IMR-90 (cell line): ENCODE measurements at regions of chr1 and their contacts with region 1.

Region 1: GRCh38 chr1:206583707-206584648 is 28.3 kb downstream of the EIF2D start:
- DNase-seq: peak; percentile 65
- ATAC-seq: peak; percentile 78
- H3K4me3 ChIP-seq: no peak overlapping the region
- H3K27ac ChIP-seq: no peak overlapping the region
- H3K4me1 ChIP-seq: peaks cover 13% of the 10 kb centered on the region
- H3K27me3 ChIP-seq: no peaks in the 10 kb centered on the region
- CTCF ChIP-seq: peak; percentile 91
- POLR2A ChIP-seq: no peak
- RAD21 ChIP-seq: peak; percentile 85

Region 2: DNA sequence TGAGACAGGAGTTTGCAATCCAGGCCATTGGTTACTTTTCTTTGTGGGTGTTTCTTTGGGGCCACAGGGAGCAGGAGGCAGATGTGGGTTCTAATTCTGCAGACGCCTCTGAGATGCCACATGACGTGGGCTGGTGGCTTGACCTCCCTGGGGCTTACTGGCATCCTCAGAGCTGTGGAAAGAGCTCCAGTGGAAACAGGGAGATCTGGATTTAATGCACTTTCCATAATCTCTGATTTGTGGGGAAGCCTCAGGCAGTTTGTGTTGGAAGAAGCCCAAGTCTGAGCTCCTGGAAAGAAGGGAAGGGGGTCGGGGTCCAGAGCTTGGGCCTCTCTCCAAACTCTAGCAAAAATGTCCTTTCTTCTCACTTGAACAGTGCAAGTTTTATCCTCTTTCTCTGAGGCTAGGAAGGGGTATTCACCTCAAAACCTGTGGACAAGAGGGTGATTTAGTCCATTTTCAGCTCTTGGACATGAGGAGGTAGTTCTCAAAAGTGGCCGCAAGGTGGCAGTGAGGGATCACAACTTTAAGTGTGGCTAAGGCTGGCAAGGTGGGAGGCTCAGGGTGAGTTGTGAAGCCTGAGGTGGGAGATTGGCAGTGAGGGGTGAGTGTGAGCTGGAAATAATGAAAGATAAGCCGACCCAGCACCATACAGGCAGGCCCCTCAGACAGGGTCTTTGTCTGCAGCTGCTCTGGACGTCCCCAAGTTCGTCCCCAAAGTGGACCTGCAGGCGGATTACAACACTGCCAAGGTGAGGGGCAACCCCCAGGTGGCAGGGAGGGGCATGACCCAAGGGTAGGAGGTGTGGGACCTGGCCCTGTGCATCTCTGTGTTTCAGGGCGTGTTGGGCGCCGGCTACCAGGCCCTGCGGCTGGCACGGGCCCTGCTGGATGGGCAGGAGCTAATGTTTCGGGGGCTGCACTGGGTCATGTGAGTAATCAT is 104.5 kb before region 1 on chr1:
- CTCF ChIA-PET with region 1: interaction called, 3 read pairs
- POLR2A ChIA-PET with region 1: no interaction called
- dilution Hi-C with region 1: no loop called
- in situ Hi-C with region 1: no loop called
- intact Hi-C with region 1: loop called (anchors 1 kb)
- DNase-seq: peak; percentile 82
- ATAC-seq: peak; percentile 86
- H3K4me3 ChIP-seq: no peak overlapping the region
- H3K27ac ChIP-seq: no peak overlapping the region
- H3K4me1 ChIP-seq: peaks cover 9% of the 10 kb centered on the region
- H3K27me3 ChIP-seq: no peaks in the 10 kb centered on the region
- CTCF ChIP-seq: peak; percentile 79
- POLR2A ChIP-seq: no peak
- RAD21 ChIP-seq: peak; percentile 76

Region 3: DNA sequence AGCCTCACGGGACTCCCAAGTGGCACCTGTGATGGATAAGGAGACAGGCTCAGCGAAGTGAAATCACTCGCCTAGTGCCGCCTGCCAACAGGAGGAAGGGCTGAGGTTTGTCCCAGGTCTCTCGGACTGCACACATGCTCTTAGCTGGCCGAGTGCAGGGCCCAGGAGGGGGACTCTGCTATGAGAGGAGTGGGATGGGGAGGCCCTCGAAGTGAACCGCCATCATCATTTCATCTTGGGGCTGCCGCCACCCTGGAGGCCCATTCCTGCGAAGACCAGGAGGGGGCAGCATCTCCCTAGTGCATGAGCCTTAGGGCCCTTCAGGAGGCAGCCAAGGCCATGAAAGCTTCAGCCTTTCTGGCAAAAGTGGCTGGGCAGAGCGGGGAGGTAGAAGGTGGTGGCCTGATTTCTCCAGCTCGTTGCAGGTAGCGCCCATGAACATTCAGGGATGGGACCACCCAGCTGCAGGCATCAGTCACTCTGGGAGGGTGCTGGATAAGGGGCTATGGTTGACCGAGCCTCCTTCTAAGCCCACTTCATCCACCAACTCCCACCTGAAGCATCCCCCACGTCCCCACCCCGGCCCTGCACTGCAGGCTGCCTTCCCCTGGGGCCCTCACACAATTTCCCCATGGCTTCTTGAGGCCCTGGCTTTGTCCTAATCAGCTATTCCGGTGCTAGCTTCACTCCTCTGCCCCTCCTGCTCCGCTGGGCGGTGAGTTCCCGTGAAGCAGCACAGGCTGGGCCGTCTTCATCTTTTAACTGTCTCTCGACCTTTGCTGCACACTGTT is 93.8 kb before region 1 on chr1:
- CTCF ChIA-PET with region 1: interaction called, 15 read pairs
- POLR2A ChIA-PET with region 1: no interaction called
- dilution Hi-C with region 1: no loop called
- in situ Hi-C with region 1: loop called (anchors 5 kb)
- intact Hi-C with region 1: loop called (anchors 1 kb)
- DNase-seq: peak; percentile 69
- ATAC-seq: peak; percentile 98
- H3K4me3 ChIP-seq: no peak overlapping the region
- H3K27ac ChIP-seq: no peak overlapping the region
- H3K4me1 ChIP-seq: peaks cover 4% of the 10 kb centered on the region
- H3K27me3 ChIP-seq: no peaks in the 10 kb centered on the region
- CTCF ChIP-seq: peak; percentile 96
- POLR2A ChIP-seq: peak; percentile 53; the same call in 1 of the 2 replicates
- RAD21 ChIP-seq: peak; percentile 99

Region 4: DNA sequence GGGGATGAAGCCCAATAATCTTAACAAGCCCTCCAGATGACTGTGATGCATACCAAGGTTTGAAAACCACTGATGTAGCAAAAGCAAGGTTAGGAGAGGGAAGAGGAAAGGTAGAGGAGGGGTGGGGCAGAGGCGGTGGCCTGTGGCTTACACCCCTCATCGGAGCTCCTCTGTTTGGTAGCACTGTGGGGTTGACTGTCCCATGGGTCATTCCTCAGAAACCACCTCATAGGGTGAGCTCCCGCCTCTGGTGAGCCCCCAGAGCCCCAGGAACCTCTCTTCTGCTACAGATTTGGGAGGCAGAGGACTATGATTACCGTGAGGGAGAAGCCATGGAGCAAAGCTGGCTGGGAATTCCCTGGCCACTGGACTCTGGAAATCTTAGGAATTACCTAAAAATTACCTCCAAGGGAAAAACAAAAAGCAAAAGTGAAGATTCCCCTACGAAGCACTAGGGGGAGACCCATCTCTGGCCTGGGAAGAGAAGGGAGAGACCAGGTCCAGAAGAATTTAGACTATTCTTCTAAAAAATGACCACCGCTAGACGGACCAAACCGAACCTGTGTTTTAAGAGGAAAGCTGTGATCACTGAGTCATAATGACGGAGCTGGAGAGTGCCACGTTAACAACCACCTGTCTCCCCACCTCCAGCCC is 78.1 kb before region 1 on chr1:
- CTCF ChIA-PET with region 1: interaction called, 6 read pairs
- POLR2A ChIA-PET with region 1: no interaction called
- dilution Hi-C with region 1: no loop called
- in situ Hi-C with region 1: no loop called
- intact Hi-C with region 1: loop called (anchors 1 kb)
- DNase-seq: peak; percentile 54
- ATAC-seq: no peak
- H3K4me3 ChIP-seq: no peak overlapping the region
- H3K27ac ChIP-seq: no peak overlapping the region
- H3K4me1 ChIP-seq: peaks cover 27% of the 10 kb centered on the region
- H3K27me3 ChIP-seq: no peaks in the 10 kb centered on the region
- CTCF ChIP-seq: peak; percentile 71
- POLR2A ChIP-seq: no peak
- RAD21 ChIP-seq: peak; percentile 61

Region 5: DNA sequence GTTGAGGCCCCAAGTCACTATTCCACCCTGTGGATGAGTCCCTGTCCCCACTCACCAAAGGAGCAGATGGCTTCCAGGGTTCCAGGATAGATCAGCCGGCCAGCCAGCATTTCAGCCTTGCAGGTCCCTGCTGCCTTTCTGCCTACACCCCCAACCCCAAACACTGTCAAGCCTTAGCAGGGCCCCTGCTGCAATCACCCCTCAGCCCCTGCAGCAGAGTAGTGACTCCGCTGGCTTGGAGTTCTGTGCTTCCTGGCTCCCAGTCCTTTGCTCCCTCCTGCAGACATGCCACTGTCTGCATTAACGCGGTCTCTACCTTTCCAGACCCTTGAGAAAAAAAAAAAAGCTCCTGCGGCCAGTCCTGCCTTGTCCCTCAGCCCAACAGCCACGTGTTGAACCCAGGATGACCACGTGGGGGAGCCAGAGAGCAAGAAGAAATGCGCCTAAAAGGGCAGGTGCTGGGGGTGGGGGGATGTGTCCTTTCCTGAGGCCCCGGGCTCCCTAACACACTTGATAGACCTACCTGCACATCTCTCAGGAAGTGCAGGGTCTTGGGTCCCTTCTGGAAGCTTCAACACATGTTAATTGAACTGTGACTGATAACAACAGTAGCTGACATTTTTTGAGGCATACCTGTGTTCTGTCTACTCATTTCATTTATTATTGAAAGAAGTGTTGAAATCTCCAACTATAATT is 39.3 kb before region 1 on chr1:
- CTCF ChIA-PET with region 1: interaction called, 10 read pairs
- POLR2A ChIA-PET with region 1: no interaction called
- dilution Hi-C with region 1: no loop called
- in situ Hi-C with region 1: loop called (anchors 5 kb)
- intact Hi-C with region 1: loop called (anchors 2 kb)
- DNase-seq: peak; percentile 31
- ATAC-seq: peak; percentile 96
- H3K4me3 ChIP-seq: no peak overlapping the region
- H3K27ac ChIP-seq: no peak overlapping the region
- H3K4me1 ChIP-seq: no peaks in the 10 kb centered on the region
- H3K27me3 ChIP-seq: peaks cover 2% of the 10 kb centered on the region
- CTCF ChIP-seq: peak; percentile 74
- POLR2A ChIP-seq: no peak
- RAD21 ChIP-seq: peak; percentile 68

Region 6: DNA sequence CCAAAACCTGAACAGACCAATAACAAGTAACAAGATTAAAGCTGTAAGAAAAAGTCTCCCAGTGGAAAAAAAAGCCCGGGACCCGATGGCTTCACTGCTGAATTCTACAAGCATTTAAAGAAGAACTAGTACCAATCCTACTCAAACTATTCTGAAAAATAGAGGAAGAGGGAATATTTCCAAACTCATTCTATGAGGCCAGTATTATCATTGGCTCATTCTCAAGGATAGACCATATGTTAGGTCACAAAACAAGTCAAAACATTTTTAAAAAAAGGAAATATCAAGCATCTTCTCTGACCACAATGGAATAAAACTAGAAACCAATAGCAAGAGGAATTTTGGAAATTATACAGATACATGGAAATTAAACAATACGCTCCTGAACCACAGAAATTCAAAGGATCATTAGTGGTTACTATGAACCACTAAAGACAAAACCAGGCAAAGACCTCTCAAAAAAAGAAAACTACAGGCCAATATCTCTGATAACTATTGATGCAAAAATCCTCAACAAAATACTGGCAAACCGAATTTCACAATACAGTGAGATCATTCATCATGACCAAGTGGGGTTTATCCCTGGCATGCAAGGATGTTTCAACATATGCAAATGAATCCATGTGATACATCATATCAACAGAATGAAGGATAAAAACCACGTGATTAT is 267.5 kb after region 1 on chr1:
- CTCF ChIA-PET with region 1: no interaction called
- POLR2A ChIA-PET with region 1: no interaction called
- dilution Hi-C with region 1: no loop called
- in situ Hi-C with region 1: no loop called
- intact Hi-C with region 1: no loop called
- DNase-seq: peak; percentile 44
- ATAC-seq: no peak
- H3K4me3 ChIP-seq: no peak overlapping the region
- H3K27ac ChIP-seq: no peak overlapping the region
- H3K4me1 ChIP-seq: peaks cover 2% of the 10 kb centered on the region; the same call in 1 of the 2 replicates
- H3K27me3 ChIP-seq: no peaks in the 10 kb centered on the region; the same call in 1 of the 2 replicates
- CTCF ChIP-seq: no peak
- POLR2A ChIP-seq: no peak
- RAD21 ChIP-seq: no peak